Activated CD4-positive, alpha-beta T cell treated with anti-CD3 and anti-CD28 coated beads, Interleukin-2, amount 10 ng/mL, durations not matched to agents 24 days and 14 days (primary cell): ENCODE measurements at regions of chr20 and their contacts with region 1.

Region 1: GRCh38 chr20:21303061-21303871 is at the start of gene XRN2:
- DNase-seq: peak; percentile 99
- H3K4me3 Mint-ChIP-seq: peak within 1 kb of the TSS; percentile 97
- H3K27ac Mint-ChIP-seq: peak within 1 kb of the TSS; percentile 99
- H3K4me1 Mint-ChIP-seq: peaks cover 30% of the 10 kb centered on the region
- H3K27me3 Mint-ChIP-seq: no peaks in the 10 kb centered on the region
- total RNA-seq, gene XRN2: 92.0 and 97.0 TPM in 2 replicates

Region 2: DNA sequence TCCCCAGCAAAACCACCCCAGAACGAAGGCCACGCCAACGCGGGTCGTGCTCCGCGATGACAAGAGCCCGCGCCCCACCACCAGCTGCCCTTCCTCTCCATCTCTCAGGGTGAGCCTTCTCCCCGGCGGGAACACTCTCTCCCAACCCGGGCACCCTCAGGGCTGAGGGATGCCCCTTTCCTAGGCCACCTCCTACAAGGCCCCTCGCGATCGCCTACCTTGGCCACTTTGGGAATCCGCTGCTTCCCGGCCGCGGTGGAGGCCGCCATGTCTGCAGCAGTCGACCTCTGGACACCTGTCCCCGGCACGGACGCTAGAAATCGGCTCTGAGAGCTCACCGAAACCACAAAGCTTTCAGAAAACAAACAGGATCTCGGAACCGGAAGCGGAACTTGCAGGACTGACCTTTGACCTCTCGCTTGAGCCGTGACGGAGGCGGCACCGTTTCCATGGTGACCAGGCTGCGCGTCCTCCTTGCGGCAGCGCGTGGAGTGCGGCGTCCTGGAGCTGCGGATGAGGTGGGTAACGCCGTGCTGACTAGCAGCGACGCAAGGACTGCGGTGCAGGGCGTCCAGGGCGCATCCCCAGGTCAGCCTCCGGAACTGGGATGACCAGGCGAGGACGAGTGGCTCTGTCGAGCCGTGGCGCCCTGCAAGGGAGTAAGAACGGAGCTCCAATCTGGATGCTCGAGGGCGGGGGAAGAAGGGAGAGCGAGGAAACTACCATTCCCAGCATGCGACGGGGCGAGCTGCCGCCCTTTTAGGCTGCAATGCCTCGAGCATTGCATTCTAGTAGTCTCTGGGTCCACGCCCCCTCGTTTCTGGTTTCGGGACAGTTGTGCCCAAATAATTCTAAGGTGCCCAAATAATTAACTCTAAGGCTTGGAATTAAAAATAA is 1250.9 kb before region 1 on chr20 and contains the starts of genes CFAP61 and CRNKL1:
- intact Hi-C with region 1: loop called (anchors 1 kb)
- DNase-seq: peak; percentile 99
- H3K4me3 Mint-ChIP-seq: peak within 1 kb of the TSS; percentile 98
- H3K27ac Mint-ChIP-seq: peak within 1 kb of the TSS; percentile 96
- H3K4me1 Mint-ChIP-seq: peaks cover 10% of the 10 kb centered on the region
- H3K27me3 Mint-ChIP-seq: peaks cover 1% of the 10 kb centered on the region
- total RNA-seq, gene CFAP61: not detected in 2 replicates
- total RNA-seq, gene CRNKL1: 22.7 and 25.1 TPM in 2 replicates

Region 3: GRCh38 chr20:21125849-21126580 is 177.3 kb before region 1 on chr20 and contains the start of gene KIZ:
- intact Hi-C with region 1: loop called (anchors 5 kb)
- DNase-seq: peak; percentile 99
- H3K4me3 Mint-ChIP-seq: peak within 1 kb of the TSS; percentile 91
- H3K27ac Mint-ChIP-seq: peak within 1 kb of the TSS; percentile 88
- H3K4me1 Mint-ChIP-seq: peaks cover 16% of the 10 kb centered on the region
- H3K27me3 Mint-ChIP-seq: peaks cover 2% of the 10 kb centered on the region
- total RNA-seq, gene KIZ: 7.5 and 9.3 TPM in 2 replicates

Region 4: DNA sequence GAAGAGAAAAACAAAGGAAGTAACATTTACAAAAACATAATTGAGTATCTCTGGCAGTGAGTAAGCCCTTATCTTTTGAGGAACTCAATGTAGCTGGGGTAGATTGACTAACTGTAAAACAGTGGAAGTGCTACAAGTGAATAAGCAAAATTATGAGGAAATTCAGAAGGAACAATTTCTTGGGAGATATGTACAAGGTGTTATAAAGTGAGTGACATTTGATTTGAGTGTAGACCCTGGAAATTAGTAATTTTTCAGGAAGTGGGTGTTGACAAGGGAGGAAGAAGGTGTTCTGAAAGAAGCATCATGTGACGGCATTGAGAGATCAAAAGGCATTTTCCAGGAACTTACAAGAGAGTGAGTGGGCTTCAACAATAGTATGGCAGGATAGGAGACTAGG is 22.0 kb after region 1 on chr20:
- intact Hi-C with region 1: loop called (anchors 2 kb)
- DNase-seq: no peak
- H3K4me3 Mint-ChIP-seq: peak overlapping the region; percentile 63
- H3K27ac Mint-ChIP-seq: peak overlapping the region; percentile 53
- H3K4me1 Mint-ChIP-seq: peaks cover 47% of the 10 kb centered on the region
- H3K27me3 Mint-ChIP-seq: no peaks in the 10 kb centered on the region

Region 5: DNA sequence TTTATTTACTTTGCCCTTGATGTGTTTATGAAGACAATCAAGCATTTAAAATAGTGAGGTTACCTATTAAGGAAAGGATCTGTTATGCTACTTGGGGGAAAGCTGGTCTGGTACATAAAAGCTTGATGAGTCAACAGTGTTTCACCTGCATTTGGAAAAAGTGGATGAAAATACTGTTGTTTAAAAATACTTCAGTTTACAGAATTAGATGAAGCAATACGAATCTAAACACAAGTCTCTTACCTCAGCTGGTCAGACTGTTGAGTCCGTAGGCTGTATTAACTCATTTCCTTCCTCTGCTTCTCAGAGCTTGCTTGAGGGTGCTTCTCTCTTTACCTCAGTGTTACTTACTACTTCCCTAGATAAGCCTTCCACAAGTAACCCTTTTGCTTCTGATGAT is 58.0 kb after region 1 on chr20:
- intact Hi-C with region 1: loop called (anchors 10 kb)
- DNase-seq: no peak
- H3K4me3 Mint-ChIP-seq: no peak overlapping the region
- H3K27ac Mint-ChIP-seq: peak overlapping the region; percentile 68
- H3K4me1 Mint-ChIP-seq: peaks cover 20% of the 10 kb centered on the region
- H3K27me3 Mint-ChIP-seq: no peaks in the 10 kb centered on the region

Region 6: GRCh38 chr20:21548390-21549035 is 245.2 kb after region 1 on chr20:
- intact Hi-C with region 1: loop called (anchors 1 kb)
- DNase-seq: peak; percentile 86
- H3K4me3 Mint-ChIP-seq: peak overlapping the region; percentile 52
- H3K27ac Mint-ChIP-seq: peak overlapping the region; percentile 78
- H3K4me1 Mint-ChIP-seq: peaks cover 22% of the 10 kb centered on the region
- H3K27me3 Mint-ChIP-seq: no peaks in the 10 kb centered on the region